ENCODE measurements at regions of chr12 and their contacts with region 1.

Region 1: DNA sequence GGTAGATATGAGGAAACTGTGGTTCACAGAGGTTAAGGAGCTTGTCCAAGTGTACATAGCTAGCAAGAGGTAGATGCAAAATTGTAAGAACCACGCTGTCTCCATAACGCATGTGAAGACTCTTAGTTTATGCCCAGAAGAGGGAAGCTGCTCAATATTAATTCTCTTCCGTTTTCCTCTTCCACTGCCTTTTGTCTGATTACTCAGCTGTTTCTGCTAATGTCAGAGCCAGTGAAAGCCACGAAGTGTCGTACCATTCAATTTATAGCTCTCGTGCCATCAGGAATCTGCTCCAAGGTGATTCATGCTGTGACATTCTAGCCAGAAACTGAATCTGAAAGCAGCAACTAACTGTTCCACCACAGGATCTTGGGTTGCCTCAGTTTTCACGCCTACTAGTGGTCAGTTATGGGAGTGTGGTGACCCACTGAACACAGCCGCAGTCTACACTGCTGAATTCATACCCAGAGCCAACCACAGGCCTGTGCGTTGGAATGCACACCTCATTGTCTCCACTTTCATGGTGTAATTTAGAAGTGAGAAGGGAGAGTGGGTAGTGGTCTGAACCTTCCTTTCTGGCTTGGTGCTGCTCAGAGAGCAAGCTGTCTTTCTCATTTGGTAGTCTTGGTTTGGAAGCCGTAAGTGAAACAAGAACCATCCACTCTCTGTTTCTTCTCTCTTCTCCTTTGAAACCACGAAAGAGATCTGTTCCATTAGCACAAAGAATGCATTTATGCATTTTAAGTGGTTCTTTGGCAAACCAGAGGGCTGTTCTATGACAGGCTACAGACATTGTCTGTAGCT is 74.2 kb upstream of the NAP1L1 start:
- DNase-seq: peak; percentile 71 to 86 (median 76)
- ATAC-seq: peak; percentile 100
- H3K4me3 ChIP-seq: no peak overlapping the region
- H3K27ac ChIP-seq: peak overlapping the region; percentile 48
- H3K4me1 ChIP-seq: peaks cover 10 to 23% of the 10 kb centered on the region in 2 experiments
- H3K27me3 ChIP-seq: no peaks in the 10 kb centered on the region
- CTCF ChIP-seq: peak; percentile 81 to 93 (median 81)
- EP300 ChIP-seq: 0 out of 2 replicates have a peak, but pooled peaks have one; percentile 28
- POLR2A ChIP-seq: no peak
- RAD21 ChIP-seq: peak; percentile 73 to 89

Region 2: DNA sequence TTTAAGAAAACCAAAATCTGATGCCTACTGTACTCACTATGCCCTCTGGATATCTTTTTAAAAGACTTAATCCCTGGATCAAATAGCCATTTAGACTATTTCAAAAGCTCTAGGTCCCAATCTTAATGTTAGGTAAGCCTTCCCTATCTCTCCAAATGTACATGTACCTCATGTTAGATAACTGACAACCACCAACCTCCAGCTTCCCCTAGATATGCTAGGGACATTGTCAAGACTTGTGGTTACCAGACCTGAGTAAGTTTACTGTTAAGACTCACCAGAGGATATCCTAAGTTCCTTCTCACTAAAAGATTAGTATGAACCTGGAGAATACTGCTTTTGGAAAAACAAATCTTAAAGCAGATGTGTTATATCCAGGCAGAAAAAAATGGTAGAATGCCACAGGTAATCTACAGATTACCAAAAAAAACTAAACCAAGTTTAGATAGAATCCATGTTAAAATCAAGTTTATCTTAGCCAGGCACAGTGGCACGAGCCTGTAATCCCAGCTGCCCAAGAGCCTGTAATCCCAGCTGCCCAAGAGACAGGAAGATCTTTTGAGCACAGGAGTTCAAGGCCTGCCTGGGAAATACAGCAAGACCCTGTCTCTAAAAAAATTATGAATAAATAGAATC is 83.9 kb before region 1 on chr12:
- CTCF ChIA-PET with region 1: no interaction called
- POLR2A ChIA-PET with region 1: no interaction called
- in situ Hi-C with region 1: loop called (anchors 5 kb)
- intact Hi-C with region 1: no loop called
- DNase-seq: peak in 3 of 4 experiments; percentile 28 to 73 (median 53)
- ATAC-seq: peak; percentile 80
- H3K4me3 ChIP-seq: no peak overlapping the region
- H3K27ac ChIP-seq: peak overlapping the region; percentile 25; the same call in 2 of the 3 replicates
- H3K4me1 ChIP-seq: peaks cover 0 to 15% of the 10 kb centered on the region in 2 experiments; a peak in 3 of 5 replicates
- H3K27me3 ChIP-seq: no peaks in the 10 kb centered on the region
- CTCF ChIP-seq: no peak
- EP300 ChIP-seq: peak; percentile 26; the same call in 1 of the 2 replicates
- POLR2A ChIP-seq: no peak
- RAD21 ChIP-seq: no peak

Region 3: GRCh38 chr12:76083904-76084862 is 74.5 kb before region 1 on chr12 and contains the start of gene NAP1L1:
- CTCF ChIA-PET with region 1: no interaction called
- POLR2A ChIA-PET with region 1: no interaction called
- in situ Hi-C with region 1: loop called (anchors 5 kb)
- intact Hi-C with region 1: loop called (anchors 1 kb)
- DNase-seq: peak; percentile 90 to 98 (median 93)
- ATAC-seq: peak; percentile 91
- H3K4me3 ChIP-seq: peak within 1 kb of the TSS; percentile 91
- H3K27ac ChIP-seq: peak within 1 kb of the TSS; percentile 93
- H3K4me1 ChIP-seq: peaks cover 16 to 38% of the 10 kb centered on the region in 2 experiments
- H3K27me3 ChIP-seq: no peaks in the 10 kb centered on the region
- CTCF ChIP-seq: peak in 2 of 3 experiments; percentile 9 to 23; a peak in 1 of 6 replicates
- EP300 ChIP-seq: 0 out of 2 replicates have a peak, but pooled peaks have one; percentile 4
- POLR2A ChIP-seq: peak; percentile 93
- RAD21 ChIP-seq: no peak; a peak in 1 of 4 replicates
- polyA plus RNA-seq, gene NAP1L1: 287 to 326 TPM

Region 4: GRCh38 chr12:76113800-76114757 is 44.6 kb before region 1 on chr12:
- CTCF ChIA-PET with region 1: no interaction called
- POLR2A ChIA-PET with region 1: no interaction called
- in situ Hi-C with region 1: no loop called
- intact Hi-C with region 1: loop called (anchors 5 kb)
- DNase-seq: peak; percentile 62 to 93 (median 74)
- ATAC-seq: peak; percentile 78
- H3K4me3 ChIP-seq: 0 out of 2 replicates have a peak overlapping the region, but pooled peaks have one; percentile 9
- H3K27ac ChIP-seq: peak overlapping the region; percentile 89
- H3K4me1 ChIP-seq: peaks cover 14 to 33% of the 10 kb centered on the region in 2 experiments; a peak in 4 of 5 replicates
- H3K27me3 ChIP-seq: no peaks in the 10 kb centered on the region
- CTCF ChIP-seq: no peak
- EP300 ChIP-seq: peak; percentile 95
- POLR2A ChIP-seq: peak; percentile 52; the same call in 1 of the 2 replicates
- RAD21 ChIP-seq: no peak

Region 5: GRCh38 chr12:76137606-76138005 is 21.1 kb before region 1 on chr12:
- CTCF ChIA-PET with region 1: no interaction called
- POLR2A ChIA-PET with region 1: no interaction called
- in situ Hi-C with region 1: no loop called
- intact Hi-C with region 1: no loop called
- DNase-seq: no peak
- ATAC-seq: no peak
- H3K4me3 ChIP-seq: no peak overlapping the region
- H3K27ac ChIP-seq: no peak overlapping the region
- H3K4me1 ChIP-seq: no peaks in the 10 kb centered on the region
- H3K27me3 ChIP-seq: no peaks in the 10 kb centered on the region
- CTCF ChIP-seq: no peak
- EP300 ChIP-seq: no peak
- POLR2A ChIP-seq: no peak
- RAD21 ChIP-seq: no peak